ENCODE measurements at regions of chr20 and their contacts with region 1.

Region 1: DNA sequence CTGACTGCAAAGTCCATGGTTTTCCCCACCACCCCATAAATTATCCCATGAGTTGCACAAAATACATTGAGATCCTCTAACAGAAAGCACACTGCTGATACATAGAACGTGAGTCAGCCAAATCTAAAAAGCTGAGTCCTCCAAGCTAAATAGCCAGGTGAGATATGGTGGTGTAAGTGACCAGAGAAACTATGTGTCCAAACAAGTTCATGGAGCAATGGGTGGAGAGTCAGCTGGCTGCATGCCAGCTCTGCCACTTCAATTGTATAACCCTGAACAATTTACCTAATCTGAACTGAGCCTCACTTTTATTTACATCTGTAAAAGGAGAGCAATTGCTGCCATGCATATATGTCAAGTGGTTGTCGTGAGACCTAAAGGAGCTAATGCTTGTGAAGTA is 9.7 kb downstream of the SNAP25 start:
- DNase-seq: no peak
- H3K4me3 ChIP-seq: no peak overlapping the region
- H3K27ac ChIP-seq: no peak overlapping the region
- H3K4me1 ChIP-seq: no peaks in the 10 kb centered on the region
- H3K27me3 ChIP-seq: no peaks in the 10 kb centered on the region
- CTCF ChIP-seq: no peak

Region 2: GRCh38 chr20:9474835-9475415 is 753.4 kb before region 1 on chr20:
- intact Hi-C with region 1: no loop called
- DNase-seq: no peak
- H3K4me3 ChIP-seq: no peak overlapping the region
- H3K27ac ChIP-seq: no peak overlapping the region
- H3K4me1 ChIP-seq: no peaks in the 10 kb centered on the region
- H3K27me3 ChIP-seq: no peaks in the 10 kb centered on the region
- CTCF ChIP-seq: no peak

Region 3: GRCh38 chr20:10271494-10272219 is 43.3 kb after region 1 on chr20:
- intact Hi-C with region 1: loop called (anchors 2 kb)
- DNase-seq: no peak
- H3K4me3 ChIP-seq: no peak overlapping the region
- H3K27ac ChIP-seq: no peak overlapping the region
- H3K4me1 ChIP-seq: no peaks in the 10 kb centered on the region
- H3K27me3 ChIP-seq: no peaks in the 10 kb centered on the region
- CTCF ChIP-seq: no peak

Measured in tibial artery (tissue), 4 donors.